ENCODE measurements at regions of chr1 and their contacts with region 1.

Region 1: DNA sequence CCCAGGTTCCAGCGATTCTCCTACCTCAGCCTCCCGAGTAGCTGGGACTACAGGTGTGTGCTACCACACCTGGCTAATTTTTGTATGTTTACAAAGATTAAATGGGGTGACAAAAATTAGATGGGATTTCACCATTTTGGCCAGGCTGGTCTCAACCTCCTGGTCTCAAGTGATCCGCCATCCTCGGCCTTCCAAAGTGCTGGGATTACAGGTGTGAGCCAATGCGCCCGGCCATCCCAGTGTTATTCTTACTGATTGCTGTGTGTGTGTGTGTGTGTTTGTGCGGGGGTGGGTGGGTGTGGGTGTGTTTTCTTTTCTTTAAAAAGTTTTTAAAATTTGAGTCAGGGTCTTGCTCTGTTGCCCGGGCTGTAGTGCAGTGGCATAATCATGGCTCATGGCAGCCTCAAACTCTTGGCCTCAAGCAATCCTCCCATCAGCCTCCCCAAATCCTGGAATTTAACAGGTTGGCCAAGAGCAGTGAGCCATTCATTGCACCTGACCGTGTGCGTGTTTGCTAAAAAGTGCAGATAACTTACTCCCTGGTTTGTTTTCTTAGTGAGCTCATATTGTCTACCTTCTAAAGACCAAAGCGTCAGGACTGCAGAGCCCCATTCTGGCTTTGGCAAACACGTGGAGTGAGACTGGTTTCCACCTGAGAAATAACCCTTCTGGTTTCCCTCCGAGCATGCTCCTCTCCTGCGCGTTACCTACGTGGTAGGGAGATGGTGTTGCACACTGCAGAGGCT is 32.4 kb upstream of the CA6 start:
- DNase-seq: no peak
- H3K4me3 ChIP-seq: no peak overlapping the region
- H3K4me3 Mint-ChIP-seq: no peak overlapping the region
- H3K27ac ChIP-seq: no peak overlapping the region
- H3K27ac Mint-ChIP-seq: no peak overlapping the region
- H3K4me1 ChIP-seq: peaks cover 2% of the 10 kb centered on the region
- H3K4me1 Mint-ChIP-seq: peaks cover 3 to 8% (median 8%) of the 10 kb centered on the region in 3 donors
- H3K27me3 ChIP-seq: no peaks in the 10 kb centered on the region
- H3K27me3 Mint-ChIP-seq: peaks cover 0 to 8% of the 10 kb centered on the region in 2 donors

Region 2: GRCh38 chr1:8962812-8963530 is 49.7 kb after region 1 on chr1:
- CTCF ChIA-PET with region 1: interaction called, 11 read pairs
- POLR2A ChIA-PET with region 1: interaction called, 5 read pairs
- DNase-seq: peak in 2 of 5 donors; percentile 52 to 58
- H3K4me3 ChIP-seq: peak overlapping the region; percentile 10
- H3K4me3 Mint-ChIP-seq: peak overlapping the region in 4 of 7 donors; percentile 54 to 66 (median 63)
- H3K27ac ChIP-seq: no peak overlapping the region
- H3K27ac Mint-ChIP-seq: peak overlapping the region in 6 of 8 donors; percentile 1 to 84 (median 46)
- H3K4me1 ChIP-seq: peaks cover 52% of the 10 kb centered on the region
- H3K4me1 Mint-ChIP-seq: peaks cover 22 to 63% (median 57%) of the 10 kb centered on the region in 3 donors
- H3K27me3 ChIP-seq: no peaks in the 10 kb centered on the region
- H3K27me3 Mint-ChIP-seq: peaks cover 4 to 14% of the 10 kb centered on the region in 2 donors